HEK293 (cell line): ENCODE measurements at regions of chr6 and their contacts with region 1.

Region 1: DNA sequence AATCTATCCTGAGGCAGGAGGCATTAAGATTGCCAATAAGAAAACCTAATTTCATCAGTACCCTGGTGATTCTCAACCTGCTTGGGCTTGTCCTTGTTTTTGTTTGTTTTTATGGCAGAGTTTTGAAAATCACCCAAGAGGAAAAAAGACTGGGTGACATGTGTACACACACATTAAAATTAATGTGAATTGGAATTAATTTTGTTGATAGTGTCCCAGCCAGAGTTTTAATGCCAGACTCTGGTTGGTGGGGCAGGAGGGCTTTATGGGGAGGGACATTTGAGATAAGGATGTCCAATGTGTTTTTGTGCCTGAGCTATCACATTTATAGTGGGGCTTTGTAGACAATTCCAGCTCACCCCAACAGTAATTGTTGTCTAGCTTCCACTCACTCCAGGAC is 184.6 kb downstream of the ID4 start:
- H3K4me3 ChIP-seq: no peak overlapping the region
- H3K27ac ChIP-seq: no peak overlapping the region
- H3K4me1 ChIP-seq: no peaks in the 10 kb centered on the region; the same call in 1 of the 2 replicates
- CTCF ChIP-seq: no peak

Region 2: GRCh38 chr6:19866985-19867627 is 154.7 kb before region 1 on chr6:
- CTCF ChIA-PET with region 1: no interaction called
- POLR2A ChIA-PET with region 1: no interaction called
- H3K4me3 ChIP-seq: no peak overlapping the region
- H3K27ac ChIP-seq: no peak overlapping the region
- H3K4me1 ChIP-seq: peaks cover 4% of the 10 kb centered on the region; the same call in 1 of the 2 replicates
- CTCF ChIP-seq: no peak

Region 3: DNA sequence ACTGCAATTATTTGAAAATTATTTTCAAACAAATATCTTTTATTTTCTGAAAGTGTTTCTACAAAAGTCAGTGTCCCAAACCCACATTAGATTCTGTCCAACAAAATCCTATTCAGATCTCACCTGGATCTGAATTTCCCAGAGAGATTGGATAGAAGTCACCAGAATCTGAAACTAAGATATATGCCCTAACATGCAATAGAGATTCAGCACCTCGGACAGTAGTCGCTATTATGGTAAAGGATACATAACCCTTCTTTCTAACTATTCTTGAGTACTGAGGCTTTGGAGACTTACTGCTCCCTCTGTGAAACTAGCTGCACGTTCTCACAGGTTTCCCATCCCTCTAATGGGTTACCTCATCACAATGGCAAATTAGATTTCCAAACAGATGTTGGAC is 33.2 kb before region 1 on chr6:
- CTCF ChIA-PET with region 1: no interaction called
- POLR2A ChIA-PET with region 1: no interaction called
- H3K4me3 ChIP-seq: no peak overlapping the region
- H3K27ac ChIP-seq: no peak overlapping the region
- H3K4me1 ChIP-seq: no peaks in the 10 kb centered on the region
- CTCF ChIP-seq: no peak

Region 4: GRCh38 chr6:20033697-20034407 is 12.1 kb after region 1 on chr6:
- CTCF ChIA-PET with region 1: interaction called, 10 read pairs
- POLR2A ChIA-PET with region 1: no interaction called
- H3K4me3 ChIP-seq: no peak overlapping the region
- H3K27ac ChIP-seq: no peak overlapping the region
- H3K4me1 ChIP-seq: no peaks in the 10 kb centered on the region
- CTCF ChIP-seq: no peak